AG04450 (cell line): ENCODE measurements at regions of chrX and their contacts with region 1.

Region 1: DNA sequence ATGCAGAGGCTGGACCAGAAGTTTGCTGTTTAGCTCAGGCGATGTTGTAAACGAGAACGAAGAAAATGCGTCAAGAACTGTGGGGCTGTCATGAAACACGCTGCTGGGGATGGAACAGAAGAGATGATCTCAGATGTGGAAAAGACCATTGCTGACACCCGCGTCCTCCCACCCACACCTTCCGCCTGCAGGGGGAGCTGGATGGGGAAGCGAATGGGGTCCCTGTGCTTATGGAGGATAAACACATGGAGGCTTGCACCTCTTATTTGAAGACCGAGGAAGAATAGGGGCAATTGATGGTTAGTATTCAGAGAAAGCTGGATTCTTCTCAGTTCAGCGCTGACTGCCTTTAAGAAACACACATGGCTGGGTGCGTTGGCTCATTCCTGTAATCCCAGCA is 63.9 kb downstream of the GPR143 start:
- DNase-seq: no peak
- H3K4me3 ChIP-seq: no peak overlapping the region
- H3K27ac ChIP-seq: no peak overlapping the region
- H3K27me3 ChIP-seq: no peaks in the 10 kb centered on the region
- CTCF ChIP-seq: no peak

Region 2: DNA sequence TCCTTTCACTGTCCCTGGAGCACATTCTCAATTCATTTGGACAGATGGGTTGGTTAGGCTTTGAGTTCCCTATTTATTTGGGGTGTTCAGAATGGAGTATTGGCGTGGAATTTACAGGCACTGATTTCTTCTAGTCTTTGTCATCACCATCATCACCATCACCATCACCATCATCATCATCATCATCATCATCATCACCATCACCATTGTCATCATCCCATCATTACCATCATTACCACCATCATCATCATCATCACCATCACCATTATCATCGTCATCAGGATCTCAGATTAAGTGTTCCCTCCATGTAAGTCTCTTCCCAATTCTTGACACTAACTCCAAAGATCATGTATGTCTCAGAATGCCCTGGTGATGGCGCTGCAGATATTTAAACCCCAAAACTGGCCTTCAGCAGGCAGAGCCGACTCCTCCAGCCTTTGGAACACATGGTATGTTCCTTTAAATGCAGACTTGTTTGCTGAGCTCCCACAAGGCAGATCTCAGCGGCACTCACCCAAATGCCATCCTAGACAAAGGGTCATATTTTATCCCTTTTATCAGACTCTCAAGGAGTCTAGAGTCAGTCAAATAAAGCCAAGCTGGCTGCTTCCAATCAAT is 880.8 kb before region 1 on chrX:
- CTCF ChIA-PET with region 1: interaction called, 11 read pairs
- POLR2A ChIA-PET with region 1: no interaction called
- DNase-seq: no peak
- H3K4me3 ChIP-seq: no peak overlapping the region
- H3K27ac ChIP-seq: no peak overlapping the region
- H3K27me3 ChIP-seq: no peaks in the 10 kb centered on the region
- CTCF ChIP-seq: no peak

Region 3: DNA sequence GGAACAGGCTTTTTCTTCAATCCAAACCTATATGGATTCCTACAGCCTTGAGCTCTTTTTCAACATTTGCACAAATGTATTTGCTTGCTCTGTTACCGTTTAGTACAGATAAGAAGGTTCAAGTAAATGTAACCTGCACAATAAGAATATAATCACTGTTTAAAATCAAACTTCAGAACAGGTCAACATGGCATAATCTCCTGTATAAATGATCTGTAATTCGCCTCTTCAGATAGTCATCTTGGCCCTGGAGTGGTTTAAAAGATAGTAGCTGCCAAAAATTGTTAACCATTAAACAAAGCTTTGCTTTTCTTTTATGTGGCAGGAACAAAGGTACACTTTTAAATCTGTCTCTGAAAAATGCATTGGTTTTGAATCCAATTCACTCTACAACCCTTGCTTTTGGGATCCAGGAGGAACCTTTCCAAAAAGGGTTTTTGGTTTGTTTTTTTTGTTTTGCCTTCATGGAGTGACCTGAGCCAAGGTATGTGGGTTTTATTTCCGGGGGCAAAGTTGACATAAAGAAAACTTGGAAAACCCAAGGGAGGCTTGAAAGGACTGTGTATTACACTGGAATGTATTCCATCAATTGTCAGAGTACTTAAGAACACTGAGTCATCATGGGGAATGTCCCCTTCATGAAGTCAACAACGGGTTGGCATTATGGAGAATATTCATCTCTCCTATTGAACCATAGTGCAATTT is 1198.9 kb after region 1 on chrX:
- CTCF ChIA-PET with region 1: no interaction called
- POLR2A ChIA-PET with region 1: no interaction called
- DNase-seq: no peak
- H3K4me3 ChIP-seq: no peak overlapping the region
- H3K27ac ChIP-seq: no peak overlapping the region
- H3K27me3 ChIP-seq: no peaks in the 10 kb centered on the region
- CTCF ChIP-seq: no peak